GM10248 (cell line): ENCODE measurements at regions of chr21 and their contacts with region 1.

Region 1: GRCh38 chr21:42467140-42467983 is 28.7 kb downstream of the RSPH1 start:
- DNase-seq: peak; percentile 56
- CTCF ChIP-seq: peak; percentile 41

Region 2: GRCh38 chr21:41419911-41420862 is 1047.2 kb before region 1 on chr21:
- CTCF ChIA-PET with region 1: no interaction called
- POLR2A ChIA-PET with region 1: no interaction called
- DNase-seq: peak; percentile 55
- CTCF ChIP-seq: no peak

Region 3: GRCh38 chr21:42456457-42456856 is 10.9 kb before region 1 on chr21:
- CTCF ChIA-PET with region 1: interaction called, 11 read pairs
- POLR2A ChIA-PET with region 1: no interaction called
- DNase-seq: no peak
- CTCF ChIP-seq: no peak

Region 4: DNA sequence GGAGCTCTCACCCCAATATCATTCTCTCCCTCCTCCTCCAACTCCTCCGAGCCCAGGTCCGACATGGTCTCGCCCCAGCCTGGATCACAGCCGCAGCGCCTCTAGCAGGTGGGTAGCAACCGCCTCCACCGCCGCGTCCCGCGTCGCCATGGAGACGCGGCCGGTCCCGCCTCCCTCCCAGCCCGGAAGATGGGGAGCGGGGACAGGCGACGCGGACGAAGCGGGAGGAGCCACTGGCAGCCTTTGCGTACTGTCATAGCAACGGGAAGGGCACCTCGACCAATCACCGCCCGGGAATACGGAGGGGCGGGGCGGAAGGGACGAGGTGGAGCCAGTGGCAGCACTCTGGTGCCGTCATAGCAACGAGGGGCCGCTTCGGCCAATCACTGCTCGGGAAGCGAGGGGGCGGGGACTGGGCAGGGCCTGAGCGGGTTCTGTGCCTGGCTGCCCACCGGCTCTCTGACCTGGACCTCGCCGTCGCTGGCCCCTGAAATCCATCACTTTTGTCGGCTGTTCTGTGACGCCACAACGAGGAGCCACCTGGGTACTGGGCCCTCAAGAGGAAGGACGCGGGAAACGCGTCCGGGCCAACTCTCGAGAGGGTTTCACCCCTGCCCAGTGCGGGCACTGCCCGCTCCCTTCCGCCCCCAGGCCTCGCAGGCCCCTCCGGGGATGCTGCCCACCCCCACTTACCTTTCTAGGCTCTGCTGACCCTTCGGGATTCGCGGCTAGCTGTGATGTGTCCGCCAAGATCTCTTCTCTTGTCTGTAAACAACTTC is 28.9 kb after region 1 on chr21 and contains the start of gene RSPH1:
- CTCF ChIA-PET with region 1: interaction called, 13 read pairs
- POLR2A ChIA-PET with region 1: no interaction called
- DNase-seq: peak; percentile 99
- CTCF ChIP-seq: peak; percentile 13

Region 5: DNA sequence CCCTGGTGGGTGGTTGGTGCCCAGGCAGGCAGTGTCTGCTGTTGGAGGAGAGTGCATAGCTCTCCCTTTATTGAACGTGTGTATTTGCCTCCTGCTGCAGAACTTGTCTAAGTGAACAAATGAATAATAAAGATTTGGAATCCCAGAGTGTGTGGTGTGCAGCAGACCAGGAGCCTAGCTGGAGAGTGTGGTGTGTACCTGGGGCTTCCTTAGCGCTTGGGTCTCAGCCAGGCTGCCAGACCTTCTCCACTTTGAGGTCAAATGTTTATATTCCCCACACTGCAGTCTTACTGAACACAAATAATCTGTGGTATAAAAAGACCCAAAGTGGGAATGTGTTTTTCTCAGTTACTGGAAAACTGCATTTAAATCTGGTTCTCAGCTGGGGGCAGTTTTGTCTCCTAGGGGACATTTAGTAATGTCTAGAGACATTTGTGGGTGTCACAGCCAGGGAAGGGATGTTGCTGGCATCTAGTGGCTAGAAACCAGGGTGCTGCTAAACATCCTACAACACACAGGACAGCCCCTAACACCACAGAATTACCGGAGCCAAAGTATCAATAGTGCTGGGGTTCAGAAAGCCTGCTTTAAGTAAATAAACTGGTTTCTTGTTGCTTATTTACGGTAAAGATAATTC is 69.9 kb after region 1 on chr21:
- CTCF ChIA-PET with region 1: interaction called, 45 read pairs
- POLR2A ChIA-PET with region 1: no interaction called
- DNase-seq: no peak
- CTCF ChIP-seq: peak; percentile 55